ENCODE measurements at regions of chr14 and their contacts with region 1.

Region 1: DNA sequence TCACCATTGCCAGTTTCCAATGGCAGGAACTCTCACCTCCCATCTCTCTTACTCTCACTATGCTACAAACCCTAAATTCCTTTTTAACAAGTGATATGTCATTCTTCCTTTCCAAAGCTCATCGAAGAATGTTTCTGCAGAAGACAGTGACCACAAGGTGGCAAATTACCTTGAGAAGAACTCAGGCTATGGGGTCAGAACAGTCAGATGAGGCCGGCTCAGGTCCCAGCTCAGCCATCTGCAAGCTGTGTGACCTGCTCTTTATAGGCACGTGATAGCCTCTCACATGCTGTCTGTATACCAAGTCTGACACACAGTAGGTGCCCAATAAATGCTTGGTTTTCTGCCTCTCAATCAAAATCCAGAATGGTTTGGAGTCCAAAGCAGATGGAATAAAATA is 80.7 kb downstream of the FOXN3 start:
- DNase-seq: peak; percentile 82
- H3K4me3 ChIP-seq: no peak overlapping the region
- H3K27ac ChIP-seq: no peak overlapping the region
- H3K4me1 ChIP-seq: peaks cover 83% of the 10 kb centered on the region
- CTCF ChIP-seq: peak; percentile 77

Region 2: GRCh38 chr14:89351516-89352404 is 15.4 kb after region 1 on chr14:
- CTCF ChIA-PET with region 1: no interaction called
- POLR2A ChIA-PET with region 1: interaction called, 18 read pairs
- intact Hi-C with region 1: no loop called
- DNase-seq: peak; percentile 83
- H3K4me3 ChIP-seq: peak overlapping the region; percentile 57
- H3K27ac ChIP-seq: peak overlapping the region; percentile 80
- H3K4me1 ChIP-seq: peaks cover 73% of the 10 kb centered on the region
- CTCF ChIP-seq: no peak

Region 3: DNA sequence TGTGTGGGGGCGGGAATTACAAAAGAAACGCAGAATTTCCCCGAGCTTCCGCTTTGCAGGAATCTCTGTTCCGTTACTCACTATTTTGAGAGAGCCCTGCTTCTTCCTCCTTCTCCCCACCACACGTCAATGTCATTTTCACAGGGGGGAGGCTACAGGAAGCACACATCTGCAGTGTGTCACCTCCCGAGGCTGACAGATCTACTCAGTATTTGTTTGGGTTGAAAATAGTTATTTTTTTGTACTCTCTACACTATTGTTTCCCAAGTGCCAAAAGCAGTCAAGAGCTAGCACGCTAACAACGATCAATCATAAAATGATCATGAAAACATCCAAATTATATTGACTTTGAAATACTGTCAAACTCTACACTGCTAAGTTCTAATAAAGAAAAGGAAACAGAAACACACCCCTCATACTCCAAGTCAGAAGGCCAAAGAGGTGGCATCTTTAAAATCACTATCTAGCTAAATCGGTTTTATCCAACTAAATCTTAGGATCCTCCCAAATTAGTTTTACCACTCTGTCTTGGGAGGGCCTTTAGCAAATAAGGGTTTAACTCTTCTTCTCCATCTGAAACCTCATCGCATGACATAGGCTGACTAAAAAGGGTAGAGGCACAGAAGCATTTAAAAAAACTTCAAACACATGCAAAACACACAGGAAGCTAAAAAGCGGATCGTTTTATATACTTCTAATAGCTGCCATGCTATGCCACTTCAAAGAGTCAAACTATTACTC is 28.9 kb after region 1 on chr14:
- CTCF ChIA-PET with region 1: interaction called, 3 read pairs
- POLR2A ChIA-PET with region 1: interaction called, 7 read pairs
- intact Hi-C with region 1: loop called (anchors 2 kb)
- DNase-seq: peak; percentile 82
- H3K4me3 ChIP-seq: peak overlapping the region; percentile 63
- H3K27ac ChIP-seq: peak overlapping the region; percentile 91
- H3K4me1 ChIP-seq: peaks cover 57% of the 10 kb centered on the region
- CTCF ChIP-seq: no peak

Region 4: GRCh38 chr14:89455412-89455811 is 119.1 kb after region 1 on chr14:
- CTCF ChIA-PET with region 1: no interaction called
- POLR2A ChIA-PET with region 1: no interaction called
- intact Hi-C with region 1: no loop called
- DNase-seq: no peak
- H3K4me3 ChIP-seq: no peak overlapping the region
- H3K27ac ChIP-seq: no peak overlapping the region
- H3K4me1 ChIP-seq: peaks cover 13% of the 10 kb centered on the region
- CTCF ChIP-seq: no peak

Region 5: GRCh38 chr14:89767861-89768268 is 431.5 kb after region 1 on chr14:
- CTCF ChIA-PET with region 1: no interaction called
- POLR2A ChIA-PET with region 1: interaction called, 3 read pairs
- intact Hi-C with region 1: loop called (anchors 2 kb)
- DNase-seq: peak; percentile 81
- H3K4me3 ChIP-seq: no peak overlapping the region
- H3K27ac ChIP-seq: no peak overlapping the region
- H3K4me1 ChIP-seq: peaks cover 37% of the 10 kb centered on the region
- CTCF ChIP-seq: peak; percentile 94